ENCODE measurements at regions of chr12 and their contacts with region 1.

Region 1: DNA sequence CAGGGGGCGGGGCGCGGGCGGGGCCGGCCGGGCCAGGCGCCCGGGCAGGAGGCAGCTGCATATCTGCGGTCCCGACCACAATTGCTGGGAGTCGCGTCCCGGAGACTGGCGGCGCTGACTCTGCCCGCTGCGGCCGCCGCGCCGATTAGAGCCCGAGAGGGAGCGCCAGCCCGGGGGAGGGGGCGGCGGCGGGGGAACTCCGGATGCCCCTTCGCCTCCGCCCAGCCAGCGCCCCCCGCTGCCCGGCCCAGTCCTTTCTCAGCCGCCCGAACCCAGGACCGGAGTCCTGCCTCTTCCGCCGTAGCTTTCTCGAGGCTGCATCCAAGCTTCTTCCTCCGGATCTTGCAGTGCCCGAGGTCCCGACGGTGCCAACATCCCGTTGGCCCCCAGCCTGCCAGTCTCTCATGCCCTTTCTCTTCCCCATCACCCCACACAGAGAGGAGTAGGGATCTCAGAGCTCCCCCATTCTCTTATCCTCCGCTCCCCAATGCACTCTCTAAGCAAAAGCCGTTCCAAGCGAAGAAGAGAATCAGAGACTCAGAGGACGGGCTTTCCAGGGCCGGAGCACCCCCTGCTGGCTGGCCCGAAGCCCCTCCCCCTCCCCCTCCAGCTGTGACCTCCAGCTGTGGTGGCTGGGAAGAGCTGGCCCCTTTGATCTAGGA is 8.8 kb upstream of the SP7 start:
- DNase-seq: peak; percentile 62 to 87 (median 74)
- ATAC-seq: peak; percentile 85 to 96 (median 96)
- H3K4me3 ChIP-seq: peak overlapping the region; percentile 48 to 66 (median 58)
- H3K27ac ChIP-seq: peak overlapping the region in 2 of 4 donors; percentile 25 to 28
- H3K4me1 ChIP-seq: no peaks in the 10 kb centered on the region
- H3K27me3 ChIP-seq: no peaks in the 10 kb centered on the region
- CTCF ChIP-seq: peak; percentile 8 to 47 (median 36)

Region 2: DNA sequence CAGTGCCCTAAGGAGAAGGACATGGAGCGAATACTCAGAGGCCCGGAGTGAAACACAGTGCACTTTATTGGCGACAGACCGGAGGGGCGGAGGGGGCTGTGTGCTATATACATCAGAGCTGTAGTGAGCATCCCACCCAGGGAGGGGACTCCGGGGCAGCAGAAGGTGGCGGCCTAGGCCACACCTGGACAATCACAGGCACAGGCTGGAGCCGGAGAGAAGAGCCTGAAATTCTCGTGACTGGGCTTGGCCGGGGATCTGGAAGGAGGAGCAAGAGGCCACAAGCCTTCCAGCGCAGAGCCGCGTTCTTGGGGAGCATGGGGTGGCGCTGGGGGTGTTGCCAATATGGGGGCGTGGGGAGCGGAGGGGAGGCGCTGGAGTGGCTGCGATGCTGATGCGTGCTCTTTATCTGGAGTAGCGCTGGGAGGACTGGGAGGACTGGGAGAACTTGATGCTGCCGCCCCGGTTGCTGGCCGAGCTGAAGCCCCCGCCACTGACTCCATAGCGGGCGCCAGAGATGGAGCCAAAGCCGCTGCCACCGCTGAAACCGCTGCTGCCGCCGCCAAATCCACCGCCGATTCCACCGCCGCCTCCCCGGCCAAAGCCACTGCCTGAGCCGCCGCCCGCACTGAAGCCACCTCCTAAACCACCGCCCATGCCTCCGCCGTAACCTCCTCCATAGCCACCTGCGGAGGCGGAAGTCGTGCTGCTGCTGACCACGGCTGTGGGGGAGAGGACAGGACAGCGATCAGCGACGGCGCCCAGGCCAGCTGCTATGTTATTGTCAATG is 555.1 kb before region 1 on chr12:
- intact Hi-C with region 1: no loop called
- DNase-seq: peak in 1 of 6 donors; percentile 61
- ATAC-seq: peak in 3 of 4 donors; percentile 44 to 78 (median 66)
- H3K4me3 ChIP-seq: no peak overlapping the region
- H3K27ac ChIP-seq: no peak overlapping the region
- H3K4me1 ChIP-seq: no peaks in the 10 kb centered on the region
- H3K27me3 ChIP-seq: no peaks in the 10 kb centered on the region
- CTCF ChIP-seq: no peak

Region 3: GRCh38 chr12:53295070-53295890 is 49.7 kb before region 1 on chr12 and contains the start of gene PFDN5:
- intact Hi-C with region 1: no loop called
- DNase-seq: peak; percentile 85 to 95 (median 88)
- ATAC-seq: peak; percentile 90 to 93 (median 92)
- H3K4me3 ChIP-seq: peak within 1 kb of the TSS; percentile 46 to 79 (median 66)
- H3K27ac ChIP-seq: peak within 1 kb of the TSS; percentile 40 to 86 (median 63)
- H3K4me1 ChIP-seq: peaks cover 6 to 21% (median 11%) of the 10 kb centered on the region in 3 donors
- H3K27me3 ChIP-seq: no peaks in the 10 kb centered on the region
- CTCF ChIP-seq: peak in 1 of 4 donors; percentile 13
- total RNA-seq, gene PFDN5: 203 to 247 (median 231) TPM

Region 4: DNA sequence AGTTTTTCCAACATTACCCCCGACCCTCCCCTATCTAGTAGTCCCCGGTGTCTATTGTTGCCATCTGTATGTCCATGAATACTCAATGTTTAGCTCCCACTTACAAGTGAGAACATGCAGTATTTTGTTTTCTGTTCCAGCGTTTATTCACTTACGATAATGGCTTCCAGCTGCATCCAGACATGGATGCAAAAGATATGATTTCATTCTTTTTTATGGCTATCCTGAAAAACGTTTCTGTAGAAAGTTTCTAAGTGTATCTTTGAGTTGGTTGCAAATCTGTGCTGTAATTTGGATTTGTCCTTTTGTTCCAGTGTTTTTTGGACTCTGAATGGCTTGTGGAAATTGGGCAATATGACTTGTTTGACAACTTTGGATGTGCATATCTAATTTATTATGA is 46.8 kb after region 1 on chr12:
- intact Hi-C with region 1: no loop called
- DNase-seq: no peak
- ATAC-seq: no peak
- H3K4me3 ChIP-seq: no peak overlapping the region
- H3K27ac ChIP-seq: peak overlapping the region in 1 of 4 donors; percentile 35
- H3K4me1 ChIP-seq: peaks cover 24 to 39% (median 25%) of the 10 kb centered on the region in 3 donors
- H3K27me3 ChIP-seq: no peaks in the 10 kb centered on the region
- CTCF ChIP-seq: no peak

Region 5: DNA sequence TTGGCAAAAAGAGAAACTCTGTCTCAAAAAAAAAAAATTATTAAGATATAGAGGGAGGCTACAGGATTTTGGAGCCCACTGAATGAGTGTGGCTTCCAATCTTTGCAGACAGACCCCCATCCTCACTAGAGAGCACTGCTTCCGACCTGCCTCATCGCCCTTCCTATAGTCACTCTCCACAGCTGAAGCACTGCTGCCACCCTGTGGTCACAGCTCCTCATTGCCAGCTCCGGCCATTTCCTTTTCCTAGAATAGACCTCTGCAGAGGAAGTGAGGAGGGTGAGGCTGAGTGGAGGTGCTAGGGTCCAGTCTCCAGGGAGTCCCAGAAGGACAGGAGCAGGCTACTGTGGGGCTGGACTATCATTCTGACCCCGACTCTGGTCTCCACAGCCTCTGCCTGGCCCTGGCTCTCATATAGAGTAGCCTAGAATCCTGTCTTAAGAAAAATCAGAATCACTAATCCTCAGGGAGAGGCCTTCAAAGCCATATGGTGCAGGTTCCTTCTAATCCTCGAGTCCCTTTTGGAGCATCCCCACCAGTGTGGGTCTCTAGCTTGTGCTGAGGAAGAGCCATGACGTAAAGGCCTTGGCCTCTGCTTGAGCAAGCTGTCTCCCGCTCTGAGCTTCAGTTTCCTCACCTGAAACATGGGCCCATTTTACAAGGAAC is 163.7 kb after region 1 on chr12:
- intact Hi-C with region 1: loop called in 1 of 3 experiments (anchors 5 kb)
- DNase-seq: peak; percentile 73 to 91 (median 87)
- ATAC-seq: peak; percentile 88 to 98 (median 93)
- H3K4me3 ChIP-seq: no peak overlapping the region
- H3K27ac ChIP-seq: no peak overlapping the region
- H3K4me1 ChIP-seq: no peaks in the 10 kb centered on the region
- H3K27me3 ChIP-seq: no peaks in the 10 kb centered on the region
- CTCF ChIP-seq: peak; percentile 72 to 83 (median 79)

Measured in pancreas (tissue), 10 donors.